Activated CD4-positive, alpha-beta T cell treated with anti-CD3 and anti-CD28 coated beads for 36 hours (primary cell): ENCODE measurements at regions of chr12 and their contacts with region 1.

Region 1: GRCh38 chr12:27940756-27941402 is 31.7 kb downstream of the PTHLH start:
- DNase-seq: peak; percentile 86
- ATAC-seq: peak; percentile 80
- H3K4me3 Mint-ChIP-seq: no peak overlapping the region
- H3K27ac Mint-ChIP-seq: no peak overlapping the region
- H3K4me1 Mint-ChIP-seq: no peaks in the 10 kb centered on the region
- H3K27me3 Mint-ChIP-seq: peaks cover 14% of the 10 kb centered on the region

Region 2: GRCh38 chr12:27179400-27180214 is 761.3 kb before region 1 on chr12:
- CTCF ChIA-PET with region 1: no interaction called
- POLR2A ChIA-PET with region 1: no interaction called
- intact Hi-C with region 1: no loop called
- DNase-seq: peak; percentile 58
- ATAC-seq: peak; percentile 95
- H3K4me3 Mint-ChIP-seq: peak overlapping the region; percentile 7
- H3K27ac Mint-ChIP-seq: peak overlapping the region; percentile 90
- H3K4me1 Mint-ChIP-seq: peaks cover 41% of the 10 kb centered on the region
- H3K27me3 Mint-ChIP-seq: no peaks in the 10 kb centered on the region

Region 3: GRCh38 chr12:27667540-27667939 is 273.3 kb before region 1 on chr12:
- CTCF ChIA-PET with region 1: no interaction called
- POLR2A ChIA-PET with region 1: no interaction called
- intact Hi-C with region 1: no loop called
- DNase-seq: peak; percentile 18
- ATAC-seq: peak; percentile 66
- H3K4me3 Mint-ChIP-seq: no peak overlapping the region
- H3K27ac Mint-ChIP-seq: no peak overlapping the region
- H3K4me1 Mint-ChIP-seq: no peaks in the 10 kb centered on the region
- H3K27me3 Mint-ChIP-seq: no peaks in the 10 kb centered on the region

Region 4: GRCh38 chr12:27733052-27733656 is 207.7 kb before region 1 on chr12:
- CTCF ChIA-PET with region 1: interaction called, 38 read pairs
- POLR2A ChIA-PET with region 1: no interaction called
- intact Hi-C with region 1: loop called (anchors 1 kb)
- DNase-seq: peak; percentile 60
- ATAC-seq: peak; percentile 42
- H3K4me3 Mint-ChIP-seq: no peak overlapping the region
- H3K27ac Mint-ChIP-seq: no peak overlapping the region
- H3K4me1 Mint-ChIP-seq: no peaks in the 10 kb centered on the region
- H3K27me3 Mint-ChIP-seq: no peaks in the 10 kb centered on the region

Region 5: DNA sequence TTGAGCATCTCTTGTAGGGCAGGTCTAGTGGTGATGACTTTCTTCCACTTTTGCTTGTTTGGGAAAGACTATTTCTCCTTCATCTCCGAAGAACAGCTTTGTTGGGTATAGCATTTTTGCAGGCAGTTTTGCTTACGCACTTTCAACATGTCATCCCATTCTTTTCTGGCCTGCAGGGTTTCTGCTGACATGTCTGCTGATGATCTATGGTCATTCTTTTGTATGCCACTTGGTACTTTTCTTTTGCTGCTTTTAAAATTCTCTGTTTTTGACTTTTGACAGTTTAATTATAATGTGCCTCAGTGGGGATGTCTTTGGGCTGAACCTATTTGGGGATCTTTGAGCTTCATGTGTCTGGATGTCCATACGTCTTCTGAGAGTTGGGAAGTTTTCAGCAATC is 46.6 kb before region 1 on chr12:
- CTCF ChIA-PET with region 1: no interaction called
- POLR2A ChIA-PET with region 1: no interaction called
- intact Hi-C with region 1: no loop called
- DNase-seq: no peak
- ATAC-seq: no peak
- H3K4me3 Mint-ChIP-seq: no peak overlapping the region
- H3K27ac Mint-ChIP-seq: no peak overlapping the region
- H3K4me1 Mint-ChIP-seq: no peaks in the 10 kb centered on the region
- H3K27me3 Mint-ChIP-seq: peaks cover 7% of the 10 kb centered on the region

Region 6: GRCh38 chr12:27927347-27927746 is 13.5 kb before region 1 on chr12:
- CTCF ChIA-PET with region 1: interaction called, 14 read pairs
- POLR2A ChIA-PET with region 1: no interaction called
- intact Hi-C with region 1: no loop called
- DNase-seq: no peak
- ATAC-seq: no peak
- H3K4me3 Mint-ChIP-seq: no peak overlapping the region
- H3K27ac Mint-ChIP-seq: no peak overlapping the region
- H3K4me1 Mint-ChIP-seq: no peaks in the 10 kb centered on the region
- H3K27me3 Mint-ChIP-seq: peaks cover 13% of the 10 kb centered on the region

Region 7: GRCh38 chr12:28872654-28873268 is 931.9 kb after region 1 on chr12:
- CTCF ChIA-PET with region 1: no interaction called
- POLR2A ChIA-PET with region 1: no interaction called
- intact Hi-C with region 1: loop called in 1 of 2 experiments (anchors 10 kb)
- DNase-seq: peak; percentile 61
- ATAC-seq: no peak
- H3K4me3 Mint-ChIP-seq: no peak overlapping the region
- H3K27ac Mint-ChIP-seq: no peak overlapping the region
- H3K4me1 Mint-ChIP-seq: no peaks in the 10 kb centered on the region
- H3K27me3 Mint-ChIP-seq: peaks cover 7% of the 10 kb centered on the region